Gastrocnemius medialis (tissue), 4 donors: ENCODE measurements at regions of chr7 and their contacts with region 1.

Region 1: DNA sequence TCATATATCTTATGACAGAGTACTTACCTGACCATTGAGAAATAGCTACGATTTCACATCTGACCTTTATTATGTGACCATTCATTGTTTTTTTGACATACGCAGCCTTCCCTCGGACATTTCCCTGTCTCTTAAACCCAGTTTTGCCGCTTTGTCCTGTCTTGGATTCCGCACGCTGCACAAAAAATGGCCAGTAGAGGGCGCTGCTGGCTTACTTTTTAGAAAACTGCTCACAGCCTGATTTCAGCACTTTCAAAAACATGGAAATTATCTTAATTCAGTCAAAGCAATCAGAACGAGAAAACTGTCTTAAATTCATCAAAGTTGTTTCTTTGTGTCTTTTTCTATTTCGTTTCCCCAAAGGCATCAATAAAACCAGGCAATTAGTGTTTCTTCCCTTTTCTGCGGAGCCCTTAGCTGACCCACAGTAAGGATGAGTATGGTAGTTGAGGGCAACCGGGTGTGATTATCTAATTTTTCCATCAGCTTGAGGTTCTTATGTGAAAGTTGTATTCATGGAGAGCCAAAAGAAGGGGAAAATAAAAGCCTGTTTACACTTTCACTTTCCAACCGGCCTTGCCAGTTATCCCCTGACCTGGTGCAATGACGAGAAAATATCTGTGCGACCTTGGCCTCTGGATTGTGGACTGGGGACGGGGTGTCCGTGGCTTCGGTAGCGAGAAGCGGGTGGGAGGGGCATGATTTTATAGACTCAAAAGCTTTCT is 144.4 kb downstream of the DYNC1I1 start:
- DNase-seq: peak; percentile 47 to 50
- ATAC-seq: peak; percentile 52 to 72
- H3K4me3 ChIP-seq: no peak overlapping the region
- H3K27ac ChIP-seq: no peak overlapping the region
- H3K4me1 ChIP-seq: no peaks in the 10 kb centered on the region
- H3K27me3 ChIP-seq: no peaks in the 10 kb centered on the region
- CTCF ChIP-seq: peak; percentile 72 to 91 (median 84)
- POLR2A ChIP-seq: no peak

Region 2: GRCh38 chr7:96075510-96076349 is 159.0 kb after region 1 on chr7:
- in situ Hi-C with region 1: no loop called
- intact Hi-C with region 1: loop called (anchors 5 kb)
- DNase-seq: peak; percentile 7 to 18
- ATAC-seq: peak; percentile 69 to 77
- H3K4me3 ChIP-seq: peak overlapping the region; percentile 51 to 66 (median 53)
- H3K27ac ChIP-seq: no peak overlapping the region
- H3K4me1 ChIP-seq: no peaks in the 10 kb centered on the region
- H3K27me3 ChIP-seq: peaks cover 0 to 10% (median 7%) of the 10 kb centered on the region in 3 donors
- CTCF ChIP-seq: peak; percentile 48 to 82 (median 64)
- POLR2A ChIP-seq: no peak

Region 3: GRCh38 chr7:97043281-97043680 is 1126.5 kb after region 1 on chr7:
- in situ Hi-C with region 1: loop called in 2 of 4 experiments (anchors 10 to 25 kb)
- intact Hi-C with region 1: no loop called
- DNase-seq: no peak
- ATAC-seq: no peak
- H3K4me3 ChIP-seq: no peak overlapping the region
- H3K27ac ChIP-seq: no peak overlapping the region
- H3K4me1 ChIP-seq: no peaks in the 10 kb centered on the region
- H3K27me3 ChIP-seq: peaks cover 0 to 8% (median 3%) of the 10 kb centered on the region in 3 donors
- CTCF ChIP-seq: no peak
- POLR2A ChIP-seq: no peak

Region 4: DNA sequence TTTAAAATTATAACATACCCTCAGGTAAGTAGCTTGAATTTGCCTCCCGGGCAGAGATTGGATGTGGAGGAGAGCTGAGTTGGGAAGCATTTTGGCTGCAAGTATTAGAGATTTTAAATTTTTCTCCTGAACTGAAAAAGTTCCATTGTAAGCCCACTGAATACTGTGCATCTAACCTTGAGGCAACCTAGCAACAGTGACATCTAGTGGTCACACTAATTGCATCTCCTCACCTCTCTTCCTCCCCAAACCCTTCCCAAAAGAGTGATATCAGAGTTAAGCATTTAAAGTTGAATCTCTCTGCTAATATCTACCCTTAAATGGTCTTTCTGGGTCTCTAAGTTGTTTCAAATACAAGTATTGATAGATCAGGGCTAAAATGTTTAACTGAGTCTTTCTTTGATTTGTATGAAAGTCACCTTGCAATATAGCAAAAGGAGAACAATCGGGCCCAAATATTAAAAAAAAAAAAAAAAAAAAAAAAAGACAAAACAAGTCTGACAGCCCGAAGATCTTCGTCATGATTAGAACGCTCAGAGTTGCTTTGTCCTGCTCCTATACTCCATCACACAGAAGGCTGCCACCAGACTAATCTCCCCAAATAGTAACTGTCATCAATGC is 1148.3 kb after region 1 on chr7:
- in situ Hi-C with region 1: loop called in 1 of 4 experiments (anchors 10 kb)
- intact Hi-C with region 1: loop called (anchors 5 kb)
- DNase-seq: no peak
- ATAC-seq: peak in 1 of 2 donors; percentile 75
- H3K4me3 ChIP-seq: no peak overlapping the region
- H3K27ac ChIP-seq: no peak overlapping the region
- H3K4me1 ChIP-seq: no peaks in the 10 kb centered on the region
- H3K27me3 ChIP-seq: no peaks in the 10 kb centered on the region
- CTCF ChIP-seq: peak in 4 of 5 experiments; percentile 25 to 64 (median 43)
- POLR2A ChIP-seq: no peak